Natural killer cell (primary cell): ENCODE measurements at regions of chrX and their contacts with region 1.

Region 1: DNA sequence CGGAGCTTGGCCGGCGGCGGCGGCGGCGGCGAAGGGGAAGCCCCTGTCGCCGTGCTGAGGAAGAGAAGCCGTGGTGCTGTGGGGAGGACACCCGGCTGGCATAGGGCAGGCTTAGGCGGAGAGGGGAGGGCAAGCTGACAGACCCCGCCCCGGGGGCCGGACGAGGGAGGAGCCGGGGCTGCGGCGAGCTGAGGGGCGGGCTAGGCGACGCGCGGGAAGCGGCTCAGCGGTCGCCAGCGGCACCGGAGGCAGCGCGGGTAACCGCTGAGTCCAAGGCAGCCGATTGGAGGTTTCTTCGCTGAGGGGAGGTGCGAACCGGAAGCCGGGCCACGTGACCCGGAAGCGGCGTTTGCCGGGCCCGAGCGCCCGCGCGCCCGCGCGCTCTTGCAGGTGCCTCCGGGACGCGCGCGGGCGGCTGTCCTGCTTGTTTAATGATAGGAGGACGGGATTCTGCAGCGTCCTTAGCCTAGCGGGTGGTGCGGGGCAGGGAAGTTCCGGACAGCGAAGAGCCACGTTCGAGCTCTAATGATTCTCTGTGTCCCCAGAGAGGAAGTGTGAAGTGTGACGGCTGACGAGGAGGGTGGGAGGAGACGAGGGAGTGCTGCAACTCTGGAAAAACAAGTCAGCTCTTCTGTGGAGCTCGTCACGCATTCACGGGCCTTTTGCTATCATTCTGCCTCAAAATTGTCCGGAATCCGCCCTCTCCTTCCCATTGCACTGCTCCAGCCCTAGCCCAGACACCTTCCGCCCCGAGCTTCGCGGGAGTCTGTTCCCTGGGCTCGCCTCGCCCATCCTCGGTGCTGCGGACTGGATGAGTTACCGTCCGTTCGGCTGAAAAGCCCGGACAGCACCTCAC is at the start of gene AP1S2:
- DNase-seq: peak; percentile 92 to 95
- ATAC-seq: peak; percentile 94 to 99 (median 95)
- H3K4me3 ChIP-seq: peak within 1 kb of the TSS; percentile 77
- H3K4me3 Mint-ChIP-seq: peak within 1 kb of the TSS; percentile 96
- H3K27ac ChIP-seq: peak within 1 kb of the TSS; percentile 94
- H3K27ac Mint-ChIP-seq: peak within 1 kb of the TSS; percentile 94 to 96
- H3K4me1 ChIP-seq: peaks cover 4% of the 10 kb centered on the region
- H3K4me1 Mint-ChIP-seq: peaks cover 9 to 12% of the 10 kb centered on the region in 2 donors
- H3K27me3 ChIP-seq: no peaks in the 10 kb centered on the region
- H3K27me3 Mint-ChIP-seq: peaks cover 0 to 15% of the 10 kb centered on the region in 2 donors
- CTCF ChIP-seq: no peak
- total RNA-seq, gene AP1S2: 21.0 to 30.8 (median 25.9) TPM

Region 2: DNA sequence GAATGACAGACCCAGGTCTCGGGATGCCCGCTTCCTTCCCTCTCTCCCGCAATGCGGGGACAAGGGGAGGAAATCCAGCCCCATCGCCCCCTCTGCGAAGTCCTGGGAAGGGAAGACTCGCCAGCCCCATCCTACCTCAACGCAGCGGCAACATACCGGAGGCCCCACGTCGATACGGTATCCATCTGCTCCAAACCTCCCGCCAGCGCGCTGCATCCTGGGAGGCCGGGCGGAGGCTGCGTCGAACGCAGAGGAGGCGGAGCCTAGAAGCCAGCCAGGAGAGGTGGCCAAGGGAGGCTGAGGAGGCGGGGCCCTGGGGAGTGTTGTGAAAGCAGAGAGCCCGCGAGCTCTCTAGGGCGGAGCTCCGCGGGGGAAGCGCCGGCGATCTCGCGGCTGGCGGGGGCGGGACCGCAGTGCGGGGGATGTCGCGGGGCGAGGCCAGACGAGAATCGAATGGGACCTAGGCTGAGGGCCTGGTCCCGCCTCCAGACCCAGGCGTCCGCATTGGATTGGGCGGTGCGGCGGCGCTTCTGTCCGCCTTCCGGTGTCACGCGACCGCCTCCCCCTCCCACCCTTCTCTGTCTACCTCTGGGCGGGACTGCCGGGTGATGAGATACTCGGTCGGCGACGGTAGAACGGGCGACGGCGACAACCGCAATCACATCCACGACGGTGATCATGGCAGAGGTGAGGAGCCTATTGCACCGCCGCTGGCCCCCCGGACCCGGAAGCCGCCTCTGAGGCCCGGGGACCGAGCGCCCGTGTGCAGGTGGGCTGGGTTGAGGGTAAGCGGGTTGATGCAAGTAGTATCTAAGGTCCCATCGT is 981.9 kb before region 1 on chrX and contains the starts of genes FANCB and MOSPD2:
- intact Hi-C with region 1: loop called (anchors 10 kb)
- DNase-seq: peak; percentile 88 to 95
- ATAC-seq: peak; percentile 88 to 98 (median 89)
- H3K4me3 ChIP-seq: peak within 1 kb of the TSS; percentile 76
- H3K4me3 Mint-ChIP-seq: peak within 1 kb of the TSS; percentile 92
- H3K27ac ChIP-seq: peak within 1 kb of the TSS; percentile 82
- H3K27ac Mint-ChIP-seq: peak within 1 kb of the TSS; percentile 90 to 91
- H3K4me1 ChIP-seq: peaks cover 6% of the 10 kb centered on the region
- H3K4me1 Mint-ChIP-seq: peaks cover 4 to 8% of the 10 kb centered on the region in 2 donors
- H3K27me3 ChIP-seq: no peaks in the 10 kb centered on the region
- H3K27me3 Mint-ChIP-seq: no peaks in the 10 kb centered on the region
- CTCF ChIP-seq: no peak
- total RNA-seq, gene FANCB: 6.0 to 9.3 (median 7.8) TPM
- total RNA-seq, gene MOSPD2: 10.5 to 18.0 (median 11.2) TPM

Region 3: DNA sequence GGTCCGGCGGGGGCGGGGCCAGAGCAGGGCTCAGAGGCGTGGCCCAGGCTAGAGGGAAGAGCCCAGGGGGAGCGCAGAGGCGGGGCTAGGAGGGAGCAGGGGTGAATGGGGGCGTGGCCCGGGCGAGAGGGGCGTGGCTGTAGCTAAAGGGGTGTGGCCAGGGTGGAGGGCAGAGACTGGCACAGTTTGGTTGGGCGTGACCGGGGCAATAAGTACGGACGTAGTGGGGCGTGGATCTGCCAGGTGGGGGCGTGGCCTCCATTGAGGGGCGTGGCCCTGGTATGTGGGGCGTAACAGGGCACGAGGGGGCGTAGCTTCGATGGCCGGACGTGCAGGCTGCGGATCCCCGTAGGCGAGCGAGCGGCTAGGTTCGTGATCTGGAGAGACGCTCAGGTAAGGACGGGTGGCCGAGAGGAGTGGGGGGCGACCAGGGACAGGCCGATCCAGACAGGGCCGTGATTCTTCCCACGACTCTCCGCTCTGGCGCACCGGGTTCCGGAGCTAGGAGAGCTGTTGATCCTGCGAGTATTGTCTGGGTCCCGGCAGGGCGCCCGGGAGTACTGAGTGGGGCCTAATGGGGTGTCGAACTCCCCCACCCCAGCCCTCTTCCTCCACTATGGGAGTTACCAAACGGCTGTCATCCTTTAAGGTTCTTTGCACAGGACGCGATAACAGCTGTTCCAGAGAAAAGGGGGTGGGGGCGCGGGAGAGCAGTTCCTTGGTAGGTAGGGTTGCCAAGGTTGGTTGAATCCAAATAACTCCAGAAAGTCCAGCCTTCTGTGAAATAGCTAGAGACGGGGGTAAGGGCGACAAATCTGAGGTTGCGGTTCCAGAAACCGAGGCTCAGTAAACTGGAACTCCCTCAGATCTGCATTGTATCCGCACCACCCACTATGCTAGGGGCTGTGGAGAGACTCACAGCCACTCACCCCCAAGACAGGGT is 116.7 kb before region 1 on chrX and contains the start of gene CA5B:
- intact Hi-C with region 1: loop called (anchors 5 kb)
- DNase-seq: peak; percentile 96 to 97
- ATAC-seq: peak; percentile 92 to 99 (median 92)
- H3K4me3 ChIP-seq: peak within 1 kb of the TSS; percentile 69
- H3K4me3 Mint-ChIP-seq: peak within 1 kb of the TSS; percentile 95
- H3K27ac ChIP-seq: peak within 1 kb of the TSS; percentile 85
- H3K27ac Mint-ChIP-seq: peak within 1 kb of the TSS; percentile 87 to 93
- H3K4me1 ChIP-seq: peaks cover 20% of the 10 kb centered on the region
- H3K4me1 Mint-ChIP-seq: peaks cover 54 to 57% of the 10 kb centered on the region in 2 donors
- H3K27me3 ChIP-seq: no peaks in the 10 kb centered on the region
- H3K27me3 Mint-ChIP-seq: no peaks in the 10 kb centered on the region
- CTCF ChIP-seq: no peak
- total RNA-seq, gene CA5B: 56.3 to 111 (median 80.5) TPM

Region 4: DNA sequence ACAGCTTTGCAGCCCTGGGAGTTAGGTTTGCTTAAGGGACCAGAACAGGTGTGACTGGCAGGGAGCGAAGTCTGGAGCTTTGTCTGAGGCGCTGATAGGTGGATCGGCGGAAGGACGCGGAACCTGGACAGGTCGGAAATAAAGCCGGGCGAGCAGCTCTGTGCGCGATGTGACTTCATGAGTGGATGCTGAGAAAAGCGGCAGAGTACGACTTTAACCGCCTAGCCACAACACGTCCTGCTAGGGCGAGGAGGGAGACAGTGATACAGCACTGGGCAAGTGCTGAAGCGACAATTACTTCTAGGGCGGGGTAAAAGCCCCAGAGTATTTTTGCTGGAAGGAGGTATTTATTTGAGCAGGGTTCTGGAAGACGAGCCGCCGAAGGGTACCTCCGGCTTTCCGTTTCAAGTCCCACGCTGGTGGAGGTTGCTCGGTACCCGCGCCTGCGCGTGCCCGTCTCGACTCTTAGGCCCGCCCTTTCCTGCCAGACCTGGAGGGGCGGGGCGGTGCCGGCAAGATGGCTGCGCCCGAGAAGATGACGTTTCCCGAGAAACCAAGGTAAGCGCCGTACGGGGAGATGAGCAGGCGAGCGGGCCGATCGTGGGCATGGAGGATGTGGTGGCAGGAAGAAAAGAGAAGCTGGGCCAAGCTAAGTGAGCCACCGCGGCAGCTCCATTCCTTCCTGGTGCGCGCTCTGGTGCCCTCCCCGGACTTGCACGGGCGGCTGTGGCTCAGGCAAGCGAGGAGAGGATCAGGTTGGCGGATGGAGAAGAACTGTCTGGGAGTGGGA is 64.8 kb before region 1 on chrX and contains the start of gene ZRSR2:
- intact Hi-C with region 1: loop called (anchors 1 kb)
- DNase-seq: peak; percentile 78 to 92
- ATAC-seq: peak; percentile 92 to 97 (median 92)
- H3K4me3 ChIP-seq: peak within 1 kb of the TSS; percentile 59
- H3K4me3 Mint-ChIP-seq: no peak within 1 kb of the TSS
- H3K27ac ChIP-seq: peak within 1 kb of the TSS; percentile 84
- H3K27ac Mint-ChIP-seq: no peak within 1 kb of the TSS
- H3K4me1 ChIP-seq: peaks cover 21% of the 10 kb centered on the region
- H3K4me1 Mint-ChIP-seq: peaks cover 16 to 17% of the 10 kb centered on the region in 2 donors
- H3K27me3 ChIP-seq: no peaks in the 10 kb centered on the region
- H3K27me3 Mint-ChIP-seq: no peaks in the 10 kb centered on the region
- CTCF ChIP-seq: no peak
- total RNA-seq, gene ZRSR2: 21.7 to 44.2 (median 28.2) TPM

Region 5: DNA sequence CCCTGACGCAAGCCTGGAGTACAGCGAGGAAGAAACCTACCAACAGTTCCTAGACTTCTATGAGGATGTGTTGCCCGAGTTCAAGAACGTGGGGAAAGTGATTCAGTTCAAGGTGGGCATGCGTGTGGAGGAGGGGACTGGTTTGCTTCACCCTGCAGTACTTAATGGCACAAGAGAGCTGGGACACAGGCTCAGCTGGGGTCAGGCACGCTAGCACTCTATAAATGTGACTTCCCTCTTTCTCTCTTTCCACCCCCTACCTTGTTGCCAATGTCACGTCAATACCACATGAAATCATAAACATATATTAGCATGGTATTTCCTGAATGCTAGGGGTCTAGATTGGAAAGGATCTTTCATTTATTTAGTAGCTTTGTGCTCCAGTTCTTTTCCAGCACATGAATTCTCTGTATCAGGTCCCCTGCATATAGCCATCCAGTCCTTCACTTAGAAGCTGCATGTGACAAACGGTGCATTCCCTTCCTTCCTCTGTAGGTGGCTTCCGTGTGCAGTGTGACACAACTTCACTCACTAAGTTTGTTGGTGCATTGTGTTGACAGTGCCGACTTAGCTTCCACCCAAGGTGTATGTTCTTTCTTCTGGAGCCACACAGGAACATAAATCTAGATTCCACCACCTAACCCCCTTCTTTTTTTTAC is 39.0 kb before region 1 on chrX:
- intact Hi-C with region 1: loop called (anchors 2 kb)
- DNase-seq: peak in 1 of 2 donors; percentile 63
- ATAC-seq: peak; percentile 56 to 66 (median 65)
- H3K4me3 ChIP-seq: no peak overlapping the region
- H3K4me3 Mint-ChIP-seq: peak overlapping the region; percentile 35
- H3K27ac ChIP-seq: no peak overlapping the region
- H3K27ac Mint-ChIP-seq: peak overlapping the region; percentile 40 to 57
- H3K4me1 ChIP-seq: peaks cover 19% of the 10 kb centered on the region
- H3K4me1 Mint-ChIP-seq: peaks cover 22 to 27% of the 10 kb centered on the region in 2 donors
- H3K27me3 ChIP-seq: no peaks in the 10 kb centered on the region
- H3K27me3 Mint-ChIP-seq: no peaks in the 10 kb centered on the region
- CTCF ChIP-seq: no peak